Activated CD8-positive, alpha-beta memory T cell treated with anti-CD3 and anti-CD28 coated beads, Interleukin-2, amount 10 ng/mL, durations not matched to agents 7 days and 5 days (primary cell): ENCODE measurements at regions of chr2 and their contacts with region 1.

Region 1: DNA sequence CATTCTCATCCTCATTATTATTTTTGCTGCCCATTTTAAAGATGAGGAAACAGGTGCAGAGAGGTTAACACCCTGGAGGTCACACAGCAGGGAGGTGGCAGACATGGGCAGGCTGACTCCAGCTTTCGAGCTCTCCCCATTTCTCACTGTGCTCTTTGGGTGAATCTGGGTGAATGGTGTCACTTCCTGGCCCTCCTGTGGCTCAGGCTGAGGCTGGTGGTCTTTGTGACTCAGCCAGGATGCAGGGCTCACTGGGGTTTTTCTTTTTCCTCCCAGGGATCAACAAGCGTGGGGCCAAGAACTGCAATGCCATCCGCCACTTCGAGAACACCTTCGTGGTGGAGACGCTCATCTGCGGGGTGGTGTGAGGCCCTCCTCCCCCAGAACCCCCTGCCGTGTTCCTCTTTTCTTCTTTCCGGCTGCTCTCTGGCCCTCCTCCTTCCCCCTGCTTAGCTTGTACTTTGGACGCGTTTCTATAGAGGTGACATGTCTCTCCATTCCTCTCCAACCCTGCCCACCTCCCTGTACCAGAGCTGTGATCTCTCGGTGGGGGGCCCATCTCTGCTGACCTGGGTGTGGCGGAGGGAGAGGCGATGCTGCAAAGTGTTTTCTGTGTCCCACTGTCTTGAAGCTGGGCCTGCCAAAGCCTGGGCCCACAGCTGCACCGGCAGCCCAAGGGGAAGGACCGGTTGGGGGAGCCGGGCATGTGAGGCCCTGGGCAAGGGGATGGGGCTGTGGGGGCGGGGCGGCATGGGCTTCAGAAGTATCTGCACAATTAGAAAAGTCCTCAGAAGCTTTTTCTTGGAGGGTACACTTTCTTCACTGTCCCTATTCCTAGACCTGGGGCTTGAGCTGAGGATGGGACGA is 13.2 kb downstream of the ITM2C start:
- DNase-seq: peak; percentile 89
- ATAC-seq: peak; percentile 93
- H3K4me3 Mint-ChIP-seq: peak overlapping the region; percentile 54
- H3K27ac Mint-ChIP-seq: peak overlapping the region; percentile 92
- H3K4me1 Mint-ChIP-seq: peaks cover 46% of the 10 kb centered on the region
- H3K27me3 Mint-ChIP-seq: peaks cover 24% of the 10 kb centered on the region

Region 2: DNA sequence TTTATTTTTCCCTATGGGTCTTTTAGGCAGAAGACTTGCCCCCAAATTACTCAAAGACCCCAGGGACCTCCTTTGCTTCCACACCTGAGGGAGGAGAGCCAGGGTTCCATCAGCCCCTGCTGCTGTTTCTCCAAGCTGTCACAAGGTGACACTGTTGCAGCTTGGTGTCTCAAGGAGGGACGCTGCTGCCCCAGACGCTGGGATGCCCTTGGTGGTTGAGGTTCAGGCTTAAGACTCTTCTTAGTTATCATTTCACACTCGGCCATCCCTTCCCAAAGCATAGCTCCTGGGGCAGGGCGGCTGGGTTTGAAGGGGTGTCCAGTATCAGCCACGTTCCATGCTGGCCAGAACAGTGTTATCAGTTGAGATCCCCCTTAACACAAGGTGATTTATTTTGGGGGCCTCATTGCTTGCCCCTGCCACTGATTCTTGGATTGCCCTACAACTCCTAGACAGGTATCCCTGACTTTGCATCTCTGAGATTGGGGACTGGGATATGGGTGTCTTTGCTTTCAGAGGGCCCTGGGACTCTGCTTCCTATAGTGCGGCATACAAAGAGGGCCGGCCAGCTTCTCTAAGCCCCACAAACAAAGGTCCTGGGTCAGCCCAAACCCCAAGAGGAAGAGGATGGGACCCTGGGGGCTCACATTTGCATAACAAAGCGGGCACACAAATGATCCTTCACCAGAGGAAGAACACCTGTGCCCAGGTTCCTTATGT is 24.4 kb after region 1 on chr2:
- CTCF ChIA-PET with region 1: interaction called, 10 read pairs
- DNase-seq: peak; percentile 76
- ATAC-seq: peak; percentile 64
- H3K4me3 Mint-ChIP-seq: no peak overlapping the region
- H3K27ac Mint-ChIP-seq: no peak overlapping the region
- H3K4me1 Mint-ChIP-seq: peaks cover 59% of the 10 kb centered on the region
- H3K27me3 Mint-ChIP-seq: peaks cover 23% of the 10 kb centered on the region

Region 3: GRCh38 chr2:230999477-230999876 is 121.5 kb after region 1 on chr2:
- CTCF ChIA-PET with region 1: no interaction called
- DNase-seq: no peak
- ATAC-seq: no peak
- H3K4me3 Mint-ChIP-seq: no peak overlapping the region
- H3K27ac Mint-ChIP-seq: no peak overlapping the region
- H3K4me1 Mint-ChIP-seq: no peaks in the 10 kb centered on the region
- H3K27me3 Mint-ChIP-seq: peaks cover 75% of the 10 kb centered on the region